ENCODE measurements at regions of chr14 and their contacts with region 1.

Region 1: GRCh38 chr14:20682435-20683124 is 1.8 kb upstream of the RNASE4 start:
- DNase-seq: peak; percentile 64 to 71
- H3K4me3 ChIP-seq: peak overlapping the region; percentile 75
- H3K27ac ChIP-seq: peak overlapping the region; percentile 82
- H3K4me1 ChIP-seq: peaks cover 21% of the 10 kb centered on the region
- H3K27me3 ChIP-seq: no peaks in the 10 kb centered on the region
- CTCF ChIP-seq: no peak

Region 2: DNA sequence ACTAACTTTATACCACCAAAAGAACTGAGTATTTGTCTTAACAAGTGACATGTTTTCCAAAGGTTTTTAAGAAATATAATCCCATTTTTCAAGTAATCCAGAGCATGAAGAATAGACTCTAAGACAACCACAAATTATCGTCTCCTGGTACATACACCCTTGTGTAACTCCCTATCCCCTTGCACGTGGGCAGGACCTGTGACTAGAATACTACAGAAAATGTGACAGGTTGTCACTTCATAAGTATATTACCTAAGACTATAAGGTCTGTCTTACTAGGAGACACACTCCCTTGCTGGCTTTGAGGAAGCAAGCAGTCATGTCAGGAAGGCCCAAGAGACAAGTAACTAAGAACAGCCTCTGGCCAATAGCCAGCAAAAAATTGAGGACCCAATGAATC is 368.6 kb before region 1 on chr14:
- CTCF ChIA-PET with region 1: no interaction called
- POLR2A ChIA-PET with region 1: no interaction called
- intact Hi-C with region 1: no loop called
- DNase-seq: no peak
- H3K4me3 ChIP-seq: no peak overlapping the region
- H3K27ac ChIP-seq: no peak overlapping the region
- H3K4me1 ChIP-seq: no peaks in the 10 kb centered on the region
- H3K27me3 ChIP-seq: no peaks in the 10 kb centered on the region
- CTCF ChIP-seq: no peak

Region 3: DNA sequence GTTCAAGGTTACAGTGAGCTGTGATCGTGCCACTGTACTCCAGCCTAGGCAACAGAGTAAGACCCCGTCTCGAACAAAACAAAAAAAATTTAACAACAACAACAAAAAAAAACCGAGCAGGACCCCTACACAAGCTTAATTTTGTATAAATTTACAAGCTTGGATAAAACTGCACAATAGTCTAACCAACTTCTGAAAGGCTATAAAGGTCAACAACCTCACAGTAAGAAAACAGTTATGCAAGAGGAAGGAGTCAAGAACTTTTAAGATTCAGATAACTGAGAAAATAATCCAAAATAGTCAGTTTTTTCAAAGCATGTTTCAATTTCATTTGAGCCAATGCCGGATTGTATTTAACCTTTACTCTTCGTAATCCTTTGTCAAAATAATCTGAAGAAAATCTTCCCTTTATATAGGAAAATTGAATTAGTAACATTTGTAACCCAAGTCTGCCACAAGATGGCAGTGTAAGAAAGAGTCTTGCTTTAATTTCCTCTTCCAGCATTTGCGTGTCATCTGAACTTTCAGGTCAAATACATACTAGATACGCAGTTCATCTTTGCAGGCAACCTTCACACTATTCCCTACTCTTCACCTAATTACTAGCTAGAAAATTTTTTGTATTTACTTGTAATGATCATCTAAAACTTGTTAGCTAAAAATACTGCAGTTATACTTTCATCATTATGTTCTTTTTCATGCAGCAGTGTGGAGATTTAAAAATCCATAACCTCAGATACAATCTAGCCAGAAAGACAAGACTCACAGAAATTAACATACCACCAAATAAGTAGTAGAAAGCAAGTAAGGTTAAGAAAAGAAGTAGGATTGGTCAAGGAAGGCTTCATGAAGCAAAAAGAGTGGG is 355.3 kb before region 1 on chr14:
- CTCF ChIA-PET with region 1: no interaction called
- POLR2A ChIA-PET with region 1: no interaction called
- intact Hi-C with region 1: loop called (anchors 2 kb)
- DNase-seq: no peak
- H3K4me3 ChIP-seq: no peak overlapping the region
- H3K27ac ChIP-seq: no peak overlapping the region
- H3K4me1 ChIP-seq: peaks cover 8% of the 10 kb centered on the region; the same call in 1 of the 2 replicates
- H3K27me3 ChIP-seq: no peaks in the 10 kb centered on the region
- CTCF ChIP-seq: peak; percentile 71

Region 4: GRCh38 chr14:20413045-20413799 is 269.4 kb before region 1 on chr14 and contains the start of gene TEP1:
- CTCF ChIA-PET with region 1: no interaction called
- POLR2A ChIA-PET with region 1: interaction called, 3 read pairs
- intact Hi-C with region 1: loop called (anchors 5 kb)
- DNase-seq: peak; percentile 65 to 83
- H3K4me3 ChIP-seq: peak within 1 kb of the TSS; percentile 74
- H3K27ac ChIP-seq: peak within 1 kb of the TSS; percentile 76
- H3K4me1 ChIP-seq: peaks cover 7% of the 10 kb centered on the region; the same call in 1 of the 2 replicates
- H3K27me3 ChIP-seq: no peaks in the 10 kb centered on the region
- CTCF ChIP-seq: no peak
- total RNA-seq, gene TEP1: 18.4 and 20.4 TPM in 2 replicates

Region 5: GRCh38 chr14:20624495-20625070 is 58.0 kb before region 1 on chr14:
- CTCF ChIA-PET with region 1: no interaction called
- POLR2A ChIA-PET with region 1: no interaction called
- intact Hi-C with region 1: loop called (anchors 1 kb)
- DNase-seq: peak; percentile 34 to 81
- H3K4me3 ChIP-seq: peak overlapping the region; percentile 67
- H3K27ac ChIP-seq: peak overlapping the region; percentile 38; the same call in 1 of the 2 replicates
- H3K4me1 ChIP-seq: no peaks in the 10 kb centered on the region
- H3K27me3 ChIP-seq: no peaks in the 10 kb centered on the region
- CTCF ChIP-seq: no peak

Region 6: GRCh38 chr14:20662968-20663732 is 19.4 kb before region 1 on chr14:
- CTCF ChIA-PET with region 1: interaction called, 8 read pairs
- POLR2A ChIA-PET with region 1: no interaction called
- intact Hi-C with region 1: loop called (anchors 1 kb)
- DNase-seq: peak; percentile 53 to 55
- H3K4me3 ChIP-seq: peak overlapping the region; percentile 54; the same call in 1 of the 2 replicates
- H3K27ac ChIP-seq: no peak overlapping the region
- H3K4me1 ChIP-seq: no peaks in the 10 kb centered on the region; the same call in 1 of the 2 replicates
- H3K27me3 ChIP-seq: no peaks in the 10 kb centered on the region
- CTCF ChIP-seq: peak; percentile 60

Region 7: GRCh38 chr14:21476925-21477681 is 794.5 kb after region 1 on chr14 and contains the starts of genes RAB2B and TOX4:
- CTCF ChIA-PET with region 1: no interaction called
- POLR2A ChIA-PET with region 1: interaction called, 10 read pairs
- intact Hi-C with region 1: no loop called
- DNase-seq: peak; percentile 91 to 92
- H3K4me3 ChIP-seq: peak within 1 kb of the TSS; percentile 92
- H3K27ac ChIP-seq: peak within 1 kb of the TSS; percentile 80
- H3K4me1 ChIP-seq: peaks cover 16% of the 10 kb centered on the region
- H3K27me3 ChIP-seq: no peaks in the 10 kb centered on the region
- CTCF ChIP-seq: peak; percentile 77
- total RNA-seq, gene RAB2B: 12.2 and 12.8 TPM in 2 replicates
- total RNA-seq, gene TOX4: 32.9 and 50.6 TPM in 2 replicates

Measured in PC-9 (cell line).